ENCODE measurements at regions of chr1 and their contacts with region 1.

Region 1: GRCh38 chr1:37501661-37502060 is 12.9 kb downstream of the MEAF6 start:
- DNase-seq: no peak
- H3K4me3 ChIP-seq: no peak overlapping the region
- H3K27ac ChIP-seq: no peak overlapping the region
- H3K4me1 ChIP-seq: peaks cover 18 to 27% (median 26%) of the 10 kb centered on the region in 4 donors
- H3K27me3 ChIP-seq: no peaks in the 10 kb centered on the region
- CTCF ChIP-seq: no peak
- EP300 ChIP-seq: no peak
- POLR2A ChIP-seq: no peak

Region 2: DNA sequence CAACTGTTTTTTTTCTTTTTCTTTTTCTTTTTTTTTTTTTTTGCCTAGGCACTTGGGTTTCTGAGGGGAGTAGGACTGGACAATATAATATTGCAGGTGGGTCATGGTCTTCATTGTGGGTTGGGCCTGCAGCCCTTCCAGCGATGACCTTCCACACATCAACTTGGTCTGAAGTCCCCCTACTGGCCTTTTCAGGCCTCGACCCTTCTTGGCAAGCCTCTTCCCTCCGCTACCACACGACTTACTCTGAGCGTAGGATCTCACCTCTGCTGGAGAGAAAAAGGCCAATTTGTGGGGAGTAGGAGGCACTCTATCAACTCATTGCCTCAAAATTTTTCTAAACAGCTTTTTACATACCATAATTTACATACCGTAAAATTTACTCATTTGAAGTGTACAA is 416.3 kb before region 1 on chr1:
- intact Hi-C with region 1: no loop called
- DNase-seq: no peak
- H3K4me3 ChIP-seq: no peak overlapping the region
- H3K27ac ChIP-seq: no peak overlapping the region
- H3K4me1 ChIP-seq: no peaks in the 10 kb centered on the region
- H3K27me3 ChIP-seq: peaks cover 0 to 40% (median 0%) of the 10 kb centered on the region in 3 donors
- CTCF ChIP-seq: no peak
- EP300 ChIP-seq: no peak
- POLR2A ChIP-seq: no peak

Region 3: GRCh38 chr1:37561133-37562132 is 59.8 kb after region 1 on chr1:
- intact Hi-C with region 1: no loop called
- DNase-seq: peak in 1 of 2 donors; percentile 37
- H3K4me3 ChIP-seq: no peak overlapping the region
- H3K27ac ChIP-seq: no peak overlapping the region
- H3K4me1 ChIP-seq: peaks cover 8 to 26% (median 13%) of the 10 kb centered on the region in 4 donors
- H3K27me3 ChIP-seq: no peaks in the 10 kb centered on the region
- CTCF ChIP-seq: peak in 2 of 7 experiments; percentile 21 to 33
- EP300 ChIP-seq: no peak
- POLR2A ChIP-seq: no peak

Region 4: GRCh38 chr1:37676281-37677243 is 174.9 kb after region 1 on chr1:
- intact Hi-C with region 1: loop called (anchors 5 kb)
- DNase-seq: peak in 1 of 2 donors; percentile 59
- H3K4me3 ChIP-seq: no peak overlapping the region
- H3K27ac ChIP-seq: peak overlapping the region in 2 of 5 donors; percentile 60 to 68
- H3K4me1 ChIP-seq: peaks cover 0 to 12% (median 0%) of the 10 kb centered on the region in 4 donors
- H3K27me3 ChIP-seq: peaks cover 0 to 15% (median 0%) of the 10 kb centered on the region in 3 donors
- CTCF ChIP-seq: no peak
- EP300 ChIP-seq: no peak
- POLR2A ChIP-seq: no peak